Caco-2 (cell line): ENCODE measurements at regions of chr5 and their contacts with region 1.

Region 1: DNA sequence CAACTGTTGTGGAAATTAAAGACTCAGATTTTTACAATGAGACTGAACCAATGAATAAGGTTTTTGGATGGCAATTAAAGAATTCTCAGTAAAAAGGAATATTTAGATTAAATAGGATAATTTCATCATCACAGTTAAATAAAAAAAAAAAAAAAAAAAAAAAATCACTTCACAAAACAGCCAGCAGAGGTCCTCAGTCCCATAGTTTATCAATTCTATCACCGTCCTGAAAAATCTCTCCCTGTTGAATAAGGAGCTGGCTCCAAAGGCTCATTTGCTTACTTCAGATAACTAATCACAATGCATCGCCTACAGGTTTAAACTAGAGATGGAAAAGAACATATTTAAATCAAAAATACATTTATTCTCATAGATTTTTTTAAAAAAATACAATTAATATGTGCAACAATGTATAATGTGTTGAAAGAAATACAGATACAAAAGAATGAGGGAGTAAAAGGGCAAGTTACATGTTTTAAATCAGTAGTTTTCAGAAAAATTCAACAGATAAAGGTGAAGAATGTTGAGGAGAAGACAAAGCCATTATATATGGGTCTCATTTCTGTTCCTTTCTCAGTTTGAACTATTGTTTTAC is 175.8 kb upstream of the CHD1 start:
- DNase-seq: peak in 1 of 2 experiments; percentile 25
- H3K4me3 ChIP-seq: no peak overlapping the region
- H3K4me3 Mint-ChIP-seq: no peak overlapping the region
- H3K27ac Mint-ChIP-seq: no peak overlapping the region
- H3K4me1 ChIP-seq: no peaks in the 10 kb centered on the region
- H3K4me1 Mint-ChIP-seq: no peaks in the 10 kb centered on the region
- H3K27me3 ChIP-seq: no peaks in the 10 kb centered on the region
- H3K27me3 Mint-ChIP-seq: peaks cover 6% of the 10 kb centered on the region
- CTCF ChIP-seq: peak; percentile 60 to 71

Region 2: DNA sequence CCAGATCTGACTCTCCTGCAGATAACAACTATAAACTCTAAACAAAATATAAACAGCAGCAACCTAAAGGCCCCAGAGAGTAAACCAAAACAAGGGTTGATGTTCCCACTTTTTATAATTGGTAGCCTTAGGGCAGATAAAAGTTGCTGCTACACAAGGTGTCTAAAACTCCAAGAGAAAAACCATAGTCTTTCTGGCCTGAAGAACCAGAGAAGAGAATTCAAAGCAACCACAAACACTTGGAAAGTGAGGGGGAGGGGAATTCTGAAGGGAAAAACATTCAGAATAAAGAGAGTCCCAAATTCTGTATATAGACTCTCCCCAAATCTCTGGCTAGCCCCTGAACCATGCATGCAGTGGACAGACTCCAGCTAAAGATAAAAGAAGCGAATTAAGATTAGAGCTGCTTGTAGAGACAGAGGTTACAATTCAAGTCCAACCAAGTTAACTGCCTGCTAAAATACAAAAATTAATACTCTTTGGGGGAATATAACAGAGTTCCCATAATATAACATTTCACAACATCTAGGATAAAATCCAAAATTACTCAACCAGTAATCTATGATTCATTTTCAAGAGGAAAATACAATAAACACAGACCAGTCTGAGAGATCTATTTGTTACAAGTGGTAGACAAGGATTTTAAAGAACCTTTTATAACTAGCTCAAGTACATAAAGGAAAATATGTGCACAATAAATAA is 368.7 kb before region 1 on chr5:
- CTCF ChIA-PET with region 1: no interaction called
- POLR2A ChIA-PET with region 1: no interaction called
- intact Hi-C with region 1: no loop called
- DNase-seq: no peak
- H3K4me3 ChIP-seq: no peak overlapping the region
- H3K4me3 Mint-ChIP-seq: no peak overlapping the region
- H3K27ac Mint-ChIP-seq: no peak overlapping the region
- H3K4me1 ChIP-seq: no peaks in the 10 kb centered on the region
- H3K4me1 Mint-ChIP-seq: no peaks in the 10 kb centered on the region
- H3K27me3 ChIP-seq: no peaks in the 10 kb centered on the region
- H3K27me3 Mint-ChIP-seq: peaks cover 3% of the 10 kb centered on the region
- CTCF ChIP-seq: no peak

Region 3: DNA sequence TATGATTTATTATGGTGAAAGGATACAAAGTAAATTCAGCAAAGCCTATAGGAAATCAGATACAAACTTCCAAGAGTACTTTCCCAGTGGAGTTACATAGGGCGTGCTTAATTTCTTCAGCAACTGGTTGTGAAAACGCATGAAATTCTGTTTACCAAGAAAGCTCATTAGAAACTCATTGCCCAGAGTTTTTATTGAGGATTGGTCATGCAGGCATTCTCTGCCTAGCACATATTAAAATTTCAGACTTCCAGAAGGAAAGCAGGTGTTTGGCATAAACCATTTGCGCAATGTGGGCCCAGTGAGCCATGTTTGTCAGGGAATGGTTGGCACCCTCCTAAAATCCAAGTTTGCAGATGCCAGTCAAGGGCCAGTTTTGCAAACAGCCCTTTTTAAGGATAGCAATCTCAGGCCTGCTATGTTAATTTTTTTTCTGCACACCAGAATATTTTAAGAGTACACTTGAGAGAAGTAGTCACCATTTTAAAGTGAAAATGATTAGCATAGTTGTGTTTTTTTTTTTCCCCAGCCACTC is 135.3 kb after region 1 on chr5:
- CTCF ChIA-PET with region 1: interaction called, 7 read pairs
- POLR2A ChIA-PET with region 1: no interaction called
- intact Hi-C with region 1: loop called (anchors 10 kb)
- DNase-seq: no peak
- H3K4me3 ChIP-seq: no peak overlapping the region
- H3K4me3 Mint-ChIP-seq: no peak overlapping the region
- H3K27ac Mint-ChIP-seq: no peak overlapping the region
- H3K4me1 ChIP-seq: no peaks in the 10 kb centered on the region
- H3K4me1 Mint-ChIP-seq: no peaks in the 10 kb centered on the region
- H3K27me3 ChIP-seq: no peaks in the 10 kb centered on the region
- H3K27me3 Mint-ChIP-seq: peaks cover 6% of the 10 kb centered on the region
- CTCF ChIP-seq: no peak

Region 4: DNA sequence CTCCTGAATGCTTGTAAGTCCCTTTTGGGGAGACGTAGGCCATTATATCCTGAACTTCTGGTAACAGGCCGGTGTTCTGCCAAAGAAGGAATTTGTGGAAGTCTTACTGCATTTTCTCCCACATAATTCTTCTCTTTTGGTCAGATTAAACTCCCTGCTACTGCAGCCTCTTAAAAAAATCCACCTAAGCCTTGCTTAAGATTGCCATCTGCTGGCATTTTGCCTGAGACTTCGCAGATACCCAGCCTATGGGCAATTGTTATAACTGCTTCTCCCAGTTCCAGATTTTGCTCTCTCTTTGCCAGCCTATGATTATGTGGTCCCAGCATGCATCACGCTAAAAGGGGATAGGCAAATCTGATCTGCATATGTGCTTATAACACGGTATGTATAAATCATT is 215.8 kb after region 1 on chr5:
- CTCF ChIA-PET with region 1: interaction called, 11 read pairs
- POLR2A ChIA-PET with region 1: no interaction called
- intact Hi-C with region 1: loop called (anchors 1 kb)
- DNase-seq: no peak
- H3K4me3 ChIP-seq: no peak overlapping the region
- H3K4me3 Mint-ChIP-seq: no peak overlapping the region
- H3K27ac Mint-ChIP-seq: no peak overlapping the region
- H3K4me1 ChIP-seq: no peaks in the 10 kb centered on the region
- H3K4me1 Mint-ChIP-seq: no peaks in the 10 kb centered on the region
- H3K27me3 ChIP-seq: no peaks in the 10 kb centered on the region
- H3K27me3 Mint-ChIP-seq: no peaks in the 10 kb centered on the region
- CTCF ChIP-seq: no peak